Breast epithelium (tissue), 4 donors: ENCODE measurements at regions of chr12 and their contacts with region 1.

Region 1: DNA sequence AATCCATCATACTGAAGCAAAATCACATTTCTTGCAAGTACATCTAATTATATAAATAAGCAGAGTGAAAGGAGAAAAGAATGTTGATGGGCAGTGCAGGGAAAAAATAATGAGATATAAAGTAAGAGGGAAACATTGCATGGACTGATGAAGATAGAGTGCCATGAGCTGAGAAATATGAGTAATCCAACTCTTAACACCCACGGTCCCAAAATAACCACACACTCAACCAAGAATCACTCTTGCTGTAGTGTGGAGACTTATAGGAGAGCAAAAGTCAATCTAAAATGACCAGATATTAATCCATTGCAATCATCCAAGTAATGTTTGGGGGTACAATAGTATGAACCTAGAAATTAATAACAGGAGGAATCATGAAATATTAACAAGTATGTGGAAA is 40.2 kb downstream of the MYF5 start:
- DNase-seq: no peak
- H3K4me3 ChIP-seq: no peak overlapping the region
- H3K27ac ChIP-seq: no peak overlapping the region
- H3K4me1 ChIP-seq: no peaks in the 10 kb centered on the region
- H3K27me3 ChIP-seq: no peaks in the 10 kb centered on the region
- CTCF ChIP-seq: no peak
- POLR2A ChIP-seq: no peak

Region 2: GRCh38 chr12:80892597-80893445 is 135.9 kb after region 1 on chr12:
- intact Hi-C with region 1: loop called (anchors 5 kb)
- DNase-seq: no peak
- H3K4me3 ChIP-seq: no peak overlapping the region
- H3K27ac ChIP-seq: no peak overlapping the region
- H3K4me1 ChIP-seq: no peaks in the 10 kb centered on the region
- H3K27me3 ChIP-seq: no peaks in the 10 kb centered on the region
- CTCF ChIP-seq: no peak
- POLR2A ChIP-seq: no peak